ENCODE measurements at regions of chr14 and their contacts with region 1.

Region 1: GRCh38 chr14:71355324-71356201 is 448.3 kb downstream of the PCNX1 start:
- DNase-seq: no peak
- ATAC-seq: no peak
- H3K4me3 ChIP-seq: no peak overlapping the region
- H3K27ac ChIP-seq: no peak overlapping the region
- H3K4me1 ChIP-seq: no peaks in the 10 kb centered on the region
- H3K27me3 ChIP-seq: no peaks in the 10 kb centered on the region
- CTCF ChIP-seq: no peak

Region 2: GRCh38 chr14:71703477-71703876 is 347.9 kb after region 1 on chr14:
- CTCF ChIA-PET with region 1: interaction called, 10 read pairs
- POLR2A ChIA-PET with region 1: no interaction called
- in situ Hi-C with region 1: no loop called
- intact Hi-C with region 1: no loop called
- DNase-seq: no peak
- ATAC-seq: no peak
- H3K4me3 ChIP-seq: no peak overlapping the region
- H3K27ac ChIP-seq: no peak overlapping the region
- H3K4me1 ChIP-seq: no peaks in the 10 kb centered on the region
- H3K27me3 ChIP-seq: no peaks in the 10 kb centered on the region
- CTCF ChIP-seq: no peak